Esophagus squamous epithelium (tissue), 5 donors: ENCODE measurements at regions of chr1 and their contacts with region 1.

Region 1: DNA sequence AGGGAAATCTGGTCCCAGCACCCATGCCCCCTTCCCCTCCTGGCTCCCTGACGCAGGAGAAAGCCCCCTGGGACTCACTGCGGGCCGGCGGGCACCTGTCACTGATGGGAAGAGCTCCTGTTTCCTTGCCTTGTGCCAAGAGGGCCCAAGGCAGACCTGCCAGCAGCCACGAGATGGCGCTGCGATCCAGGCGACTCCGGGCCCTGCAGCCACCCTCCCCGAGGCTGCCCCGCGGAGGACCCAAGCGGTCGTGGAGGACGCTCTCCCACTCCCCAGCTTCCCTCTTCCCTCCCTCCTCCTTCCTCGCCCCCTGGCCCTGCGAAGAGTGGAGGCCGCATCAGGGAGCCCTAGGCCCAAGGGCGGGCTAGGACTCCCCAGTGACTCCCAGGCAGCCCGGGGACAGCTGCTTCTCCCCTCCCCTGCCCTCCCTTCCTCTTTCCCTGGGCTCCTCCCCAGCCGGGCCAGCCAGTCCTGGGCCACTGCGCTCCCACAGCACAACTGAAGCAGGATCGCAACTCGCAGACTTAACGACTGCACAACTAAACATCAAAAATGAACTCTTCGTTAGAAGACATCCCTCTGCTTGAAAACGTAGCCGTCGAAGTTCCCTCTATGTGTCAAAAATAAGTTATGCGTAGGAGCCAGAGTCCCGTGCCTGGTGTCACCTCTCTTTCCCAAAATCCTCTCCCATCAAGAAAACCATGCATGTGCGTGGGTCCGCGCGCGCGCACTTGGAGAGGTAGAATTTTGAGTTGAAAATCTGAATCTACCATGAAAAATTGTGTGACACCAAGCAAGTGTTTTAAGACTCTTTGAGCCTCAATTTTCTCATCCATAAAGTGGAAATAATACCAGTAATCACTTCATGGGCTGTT is 34.2 kb downstream of the BATF3 start:
- DNase-seq: no peak
- H3K4me3 ChIP-seq: peak overlapping the region; percentile 26 to 78 (median 57)
- H3K27ac ChIP-seq: peak overlapping the region; percentile 47 to 86 (median 80)
- H3K4me1 ChIP-seq: peaks cover 7 to 40% (median 21%) of the 10 kb centered on the region in 3 donors
- H3K27me3 ChIP-seq: peaks cover 0 to 11% (median 0%) of the 10 kb centered on the region in 4 donors
- CTCF ChIP-seq: peak; percentile 86 to 97 (median 90)
- POLR2A ChIP-seq: no peak

Region 2: DNA sequence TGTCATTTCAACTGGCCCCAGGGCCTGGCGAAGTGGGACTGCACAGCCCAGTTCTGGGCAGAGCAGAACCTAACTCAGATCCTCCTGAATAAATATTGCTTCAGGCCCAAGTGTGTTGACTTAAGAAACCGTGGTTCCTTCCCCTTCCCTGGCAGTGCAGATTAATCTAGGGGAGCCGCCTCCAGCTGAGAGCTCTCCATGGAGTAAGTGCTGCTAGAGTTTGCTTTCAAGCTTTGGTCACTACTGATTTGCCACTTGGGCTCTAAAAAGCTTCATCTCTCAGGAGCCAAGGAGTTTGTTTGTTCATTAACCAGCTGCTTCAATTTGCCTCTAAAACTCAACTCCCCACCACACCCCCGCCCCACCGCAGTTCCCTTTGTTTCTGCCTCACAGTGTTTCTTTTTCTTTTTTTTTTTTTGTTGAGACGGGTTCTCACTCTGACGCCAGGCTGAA is 517.9 kb before region 1 on chr1:
- intact Hi-C with region 1: no loop called
- DNase-seq: no peak
- H3K4me3 ChIP-seq: no peak overlapping the region
- H3K27ac ChIP-seq: peak overlapping the region; percentile 31 to 61 (median 49)
- H3K4me1 ChIP-seq: peaks cover 0 to 33% (median 0%) of the 10 kb centered on the region in 3 donors
- H3K27me3 ChIP-seq: no peaks in the 10 kb centered on the region
- CTCF ChIP-seq: no peak
- POLR2A ChIP-seq: no peak

Region 3: GRCh38 chr1:212760126-212760823 is 94.8 kb after region 1 on chr1:
- intact Hi-C with region 1: loop called (anchors 10 kb)
- DNase-seq: no peak
- H3K4me3 ChIP-seq: no peak overlapping the region
- H3K27ac ChIP-seq: no peak overlapping the region
- H3K4me1 ChIP-seq: no peaks in the 10 kb centered on the region
- H3K27me3 ChIP-seq: no peaks in the 10 kb centered on the region
- CTCF ChIP-seq: peak in 1 of 6 experiments; percentile 34
- POLR2A ChIP-seq: no peak